ENCODE measurements at regions of chr9 and their contacts with region 1.

Region 1: DNA sequence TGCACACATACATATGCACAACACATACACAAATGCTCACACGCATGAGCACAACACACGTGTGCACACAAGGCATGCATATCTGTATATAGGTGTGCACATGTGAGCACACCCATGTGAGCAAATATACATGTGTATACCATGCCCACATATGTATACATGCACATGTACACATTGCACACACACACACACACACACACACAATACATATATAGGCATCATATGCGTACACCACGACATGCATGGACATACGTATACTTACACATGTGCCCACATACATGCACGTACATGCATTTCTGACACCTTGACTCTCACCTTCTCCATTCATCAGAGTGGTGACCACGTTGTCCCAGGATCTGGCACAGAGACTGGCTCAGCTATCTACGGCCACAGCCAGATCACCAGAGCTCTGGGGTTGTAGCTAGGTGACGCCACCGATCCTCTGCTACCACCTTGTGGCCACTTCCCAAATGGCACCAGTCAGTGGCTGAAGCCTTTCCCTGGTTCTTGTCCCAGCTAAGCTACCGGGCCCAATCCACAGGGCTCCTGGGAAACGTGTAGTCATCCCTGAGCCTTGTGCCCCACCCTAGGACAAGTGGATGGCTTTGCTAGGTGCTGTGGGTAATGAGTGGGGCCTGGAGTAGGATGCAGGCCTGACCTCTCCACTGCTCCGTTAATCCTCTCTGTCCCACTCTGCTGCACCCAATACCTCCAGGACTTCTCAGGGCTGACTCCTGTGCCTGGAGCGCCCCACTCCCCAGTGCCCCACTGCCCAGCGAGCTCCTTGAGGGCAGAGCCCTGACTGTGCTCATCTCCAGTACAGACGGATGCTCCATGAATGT is 194.4 kb downstream of the RGS3 start:
- DNase-seq: peak; percentile 85 to 87
- ATAC-seq: peak; percentile 89 to 96
- H3K4me3 ChIP-seq: no peak overlapping the region
- H3K27ac ChIP-seq: peak overlapping the region in 1 of 2 experiments; percentile 64; a peak in 3 of 6 replicates
- H3K4me1 ChIP-seq: peaks cover 8% of the 10 kb centered on the region
- CTCF ChIP-seq: peak; percentile 94
- EP300 ChIP-seq: no peak
- POLR2A ChIP-seq: no peak
- RAD21 ChIP-seq: peak; percentile 97

Region 2: DNA sequence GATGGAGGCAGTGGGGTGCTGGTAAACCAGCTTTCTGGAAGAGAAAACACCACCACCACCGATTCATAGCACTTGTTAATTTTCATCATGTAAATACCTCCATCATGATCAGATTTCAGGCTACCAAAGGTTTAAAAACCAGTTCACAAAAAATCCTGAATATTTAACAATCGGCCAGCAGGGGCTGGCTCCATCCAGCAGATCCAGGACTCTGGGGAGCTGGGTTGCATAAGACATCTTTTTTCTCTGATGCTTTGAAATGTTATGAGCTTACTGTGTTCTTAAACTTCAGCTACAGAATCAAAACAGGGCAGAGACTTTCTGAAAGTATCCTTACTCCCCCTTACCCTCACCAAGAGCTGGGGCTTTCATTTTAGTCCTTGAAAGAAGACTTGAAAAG is 340.1 kb before region 1 on chr9:
- CTCF ChIA-PET with region 1: interaction called, 13 read pairs
- POLR2A ChIA-PET with region 1: no interaction called
- DNase-seq: no peak
- ATAC-seq: peak; percentile 50 to 61; a peak in 3 of 6 replicates
- H3K4me3 ChIP-seq: no peak overlapping the region
- H3K27ac ChIP-seq: no peak overlapping the region
- H3K4me1 ChIP-seq: no peaks in the 10 kb centered on the region
- CTCF ChIP-seq: no peak
- EP300 ChIP-seq: no peak
- POLR2A ChIP-seq: no peak
- RAD21 ChIP-seq: no peak

Region 3: DNA sequence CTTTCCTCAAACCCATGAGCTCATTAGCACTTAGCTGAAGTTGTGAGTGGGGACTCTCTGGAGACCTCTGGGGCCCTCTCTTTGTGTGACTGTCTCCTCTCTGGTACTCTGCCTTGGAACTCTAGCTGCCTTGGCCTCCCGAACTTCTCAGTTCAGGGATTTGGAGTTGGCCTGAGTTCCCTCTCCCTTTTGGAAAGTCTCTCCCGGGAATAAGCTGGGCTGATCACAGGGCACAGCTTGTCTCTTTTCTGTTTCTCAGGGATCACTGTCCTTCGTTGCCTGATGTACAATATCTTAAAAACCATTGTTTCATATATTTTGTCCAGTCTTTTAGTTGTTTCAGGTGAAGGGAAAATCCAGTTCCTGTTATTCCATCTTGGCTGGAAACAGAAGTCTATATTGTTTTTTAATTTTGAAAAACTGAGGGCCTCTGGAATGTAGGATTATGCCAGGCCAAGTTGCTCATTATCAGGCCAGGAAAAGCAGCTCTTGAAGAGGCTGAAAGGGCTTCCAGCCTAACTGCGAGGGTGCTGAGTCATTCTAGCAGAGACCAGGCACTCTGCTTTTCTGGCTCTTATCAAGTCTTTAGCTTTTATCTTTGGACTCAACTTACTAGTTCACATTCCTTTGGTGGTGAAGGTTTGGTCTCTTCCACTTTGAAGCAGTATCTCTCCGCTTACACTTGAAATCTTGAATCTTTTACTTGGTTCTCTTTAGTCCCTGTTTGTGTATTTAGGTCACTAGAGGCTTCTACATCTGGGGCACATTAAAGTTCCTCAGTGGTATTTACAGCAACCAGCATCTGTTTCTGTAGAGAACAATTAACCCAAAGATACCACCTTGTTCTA is 202.8 kb before region 1 on chr9:
- CTCF ChIA-PET with region 1: interaction called, 374 read pairs
- POLR2A ChIA-PET with region 1: no interaction called
- DNase-seq: peak in 1 of 2 experiments; percentile 72
- ATAC-seq: peak in 1 of 2 experiments; percentile 89; a peak in 3 of 6 replicates
- H3K4me3 ChIP-seq: no peak overlapping the region
- H3K27ac ChIP-seq: peak overlapping the region; percentile 68 to 85
- H3K4me1 ChIP-seq: peaks cover 20% of the 10 kb centered on the region
- CTCF ChIP-seq: no peak
- EP300 ChIP-seq: no peak
- POLR2A ChIP-seq: no peak
- RAD21 ChIP-seq: no peak

Region 4: DNA sequence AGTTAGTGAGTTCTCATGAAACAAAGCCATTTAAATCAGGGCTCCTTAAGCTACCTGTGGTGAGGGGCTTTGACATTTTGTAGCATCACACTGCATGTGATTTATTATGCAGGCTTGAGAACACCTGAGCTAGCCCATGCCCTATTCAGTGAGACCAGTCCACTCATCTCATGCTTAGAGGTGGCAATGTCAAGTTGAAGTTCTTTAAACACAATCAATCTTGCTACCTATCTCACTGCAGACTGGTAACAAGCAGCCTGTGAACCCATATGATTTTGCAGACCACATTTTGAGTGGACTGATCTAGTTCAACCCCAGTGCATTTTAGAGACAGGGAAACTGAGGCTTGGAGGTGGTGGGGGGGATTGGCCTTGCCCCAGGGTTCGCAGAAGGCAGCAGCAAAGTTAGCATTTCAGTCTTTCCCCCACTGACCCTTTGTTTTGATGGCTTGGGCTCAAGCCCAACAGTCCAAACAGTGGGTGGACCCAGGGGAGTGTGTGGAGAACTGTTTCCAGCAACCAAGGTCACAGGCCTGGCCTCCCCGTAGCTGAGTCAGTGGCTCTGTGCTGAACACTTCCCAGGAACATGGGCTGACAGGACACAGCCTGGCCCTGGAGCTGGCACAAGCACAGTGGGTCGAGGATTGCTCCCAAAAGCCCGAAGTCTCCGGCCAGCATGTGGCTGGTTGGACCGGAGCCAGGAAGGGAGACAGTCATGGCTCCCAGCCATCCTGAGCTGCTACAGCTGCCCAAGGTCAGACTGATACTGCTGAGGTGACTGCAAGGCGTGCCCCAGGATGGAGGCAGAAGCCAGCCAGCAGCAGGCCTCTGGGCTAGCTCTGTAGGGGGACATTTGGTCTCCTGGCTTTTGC is 99.1 kb before region 1 on chr9:
- CTCF ChIA-PET with region 1: interaction called, 12 read pairs
- POLR2A ChIA-PET with region 1: no interaction called
- DNase-seq: no peak
- ATAC-seq: peak in 1 of 2 experiments; percentile 55; a peak in 3 of 6 replicates
- H3K4me3 ChIP-seq: no peak overlapping the region
- H3K27ac ChIP-seq: peak overlapping the region in 1 of 2 experiments; percentile 57; a peak in 4 of 6 replicates
- H3K4me1 ChIP-seq: peaks cover 17% of the 10 kb centered on the region
- CTCF ChIP-seq: no peak
- EP300 ChIP-seq: no peak
- POLR2A ChIP-seq: no peak
- RAD21 ChIP-seq: no peak

Region 5: DNA sequence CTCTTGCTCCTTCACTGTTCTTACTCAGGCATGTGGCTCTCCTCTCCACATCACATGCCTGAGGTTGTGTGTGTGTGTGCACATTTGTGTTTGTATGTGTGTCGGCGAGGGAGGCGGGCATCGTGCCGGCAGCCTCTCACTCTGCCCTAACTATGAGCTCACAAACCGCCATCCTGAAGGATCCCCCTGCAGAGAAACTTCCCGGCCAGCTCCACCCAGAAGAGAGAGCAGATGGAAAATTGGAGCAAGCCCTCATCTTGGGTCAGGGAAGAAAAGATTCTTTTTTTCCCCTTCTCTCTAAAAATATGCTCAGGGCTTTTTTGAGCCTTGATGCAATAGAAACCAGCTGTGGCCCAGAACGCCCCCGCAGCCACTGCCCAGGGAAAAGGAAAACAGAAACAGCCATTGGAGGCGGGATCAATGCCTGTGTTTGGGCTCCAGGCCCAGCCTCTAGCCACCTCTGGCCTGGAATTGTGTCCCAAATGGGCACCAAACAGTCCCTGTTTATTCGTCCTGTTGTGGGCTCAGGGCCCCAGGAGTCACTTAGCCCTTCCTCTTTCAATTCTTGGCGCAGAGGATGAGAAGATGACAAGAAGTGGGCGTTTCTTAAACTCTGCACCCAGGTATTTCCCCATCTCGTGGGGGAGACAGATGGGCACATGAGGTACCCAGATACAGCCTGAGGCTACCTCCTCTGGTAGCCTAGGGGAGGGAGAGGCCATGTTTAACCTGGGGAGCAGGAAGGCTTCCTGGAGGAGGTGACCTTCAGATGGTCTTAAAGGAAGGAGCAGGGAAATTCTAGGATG is 42.9 kb before region 1 on chr9:
- CTCF ChIA-PET with region 1: interaction called, 120 read pairs
- POLR2A ChIA-PET with region 1: no interaction called
- DNase-seq: no peak
- ATAC-seq: no peak
- H3K4me3 ChIP-seq: no peak overlapping the region
- H3K27ac ChIP-seq: no peak overlapping the region
- H3K4me1 ChIP-seq: peaks cover 9% of the 10 kb centered on the region
- CTCF ChIP-seq: no peak
- EP300 ChIP-seq: no peak
- POLR2A ChIP-seq: no peak
- RAD21 ChIP-seq: no peak

Region 6: DNA sequence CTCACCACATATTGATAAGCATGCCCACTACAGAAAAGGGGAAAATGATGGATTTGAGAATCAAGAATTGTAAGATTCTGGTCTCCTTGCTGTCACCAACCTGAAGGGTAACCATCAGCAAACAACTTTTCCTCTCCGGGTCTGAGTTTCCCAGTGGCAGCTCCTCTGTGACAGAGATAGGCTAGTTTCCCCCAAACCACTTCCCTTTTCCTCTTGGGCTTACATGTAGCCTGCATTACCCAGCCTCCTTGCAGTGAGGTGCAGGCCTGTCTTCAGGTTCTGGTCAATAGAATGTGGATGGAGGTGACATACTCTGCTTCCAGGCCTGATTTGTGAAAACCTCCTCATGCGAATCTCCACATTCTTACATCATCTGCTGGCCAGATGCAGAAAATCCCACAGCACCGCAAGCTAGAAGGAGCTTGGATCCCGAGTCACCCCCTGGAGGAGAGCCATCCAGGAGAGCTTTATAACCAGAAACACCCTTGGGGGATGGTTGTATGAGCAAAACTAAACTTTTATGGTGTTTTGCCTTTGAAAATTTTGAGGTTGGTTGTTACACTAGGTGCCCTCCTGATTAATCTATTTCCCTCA is 11.7 kb after region 1 on chr9:
- CTCF ChIA-PET with region 1: interaction called, 100 read pairs
- POLR2A ChIA-PET with region 1: no interaction called
- DNase-seq: no peak
- ATAC-seq: no peak
- H3K4me3 ChIP-seq: no peak overlapping the region
- H3K27ac ChIP-seq: no peak overlapping the region
- H3K4me1 ChIP-seq: no peaks in the 10 kb centered on the region
- CTCF ChIP-seq: no peak
- EP300 ChIP-seq: no peak
- POLR2A ChIP-seq: no peak
- RAD21 ChIP-seq: no peak

Region 7: GRCh38 chr9:113701774-113702755 is 44.1 kb after region 1 on chr9:
- CTCF ChIA-PET with region 1: no interaction called
- POLR2A ChIA-PET with region 1: no interaction called
- DNase-seq: no peak
- ATAC-seq: no peak
- H3K4me3 ChIP-seq: no peak overlapping the region
- H3K27ac ChIP-seq: no peak overlapping the region
- H3K4me1 ChIP-seq: no peaks in the 10 kb centered on the region; the same call in 2 of the 3 replicates
- CTCF ChIP-seq: no peak
- EP300 ChIP-seq: no peak
- POLR2A ChIP-seq: no peak
- RAD21 ChIP-seq: no peak